Activated T-helper 2 cell treated with anti-CD3 and anti-CD28 coated beads, Interferon-gamma antibody, Interleukin-2, Interleukin-4, amounts not matched to agents 10 μg/mL and 5 μg/mL and 100 μg/mL, durations not matched to agents 14 hours and 24 hours and 36 hours (primary cell): ENCODE measurements at regions of chr11 and their contacts with region 1.

Region 1: DNA sequence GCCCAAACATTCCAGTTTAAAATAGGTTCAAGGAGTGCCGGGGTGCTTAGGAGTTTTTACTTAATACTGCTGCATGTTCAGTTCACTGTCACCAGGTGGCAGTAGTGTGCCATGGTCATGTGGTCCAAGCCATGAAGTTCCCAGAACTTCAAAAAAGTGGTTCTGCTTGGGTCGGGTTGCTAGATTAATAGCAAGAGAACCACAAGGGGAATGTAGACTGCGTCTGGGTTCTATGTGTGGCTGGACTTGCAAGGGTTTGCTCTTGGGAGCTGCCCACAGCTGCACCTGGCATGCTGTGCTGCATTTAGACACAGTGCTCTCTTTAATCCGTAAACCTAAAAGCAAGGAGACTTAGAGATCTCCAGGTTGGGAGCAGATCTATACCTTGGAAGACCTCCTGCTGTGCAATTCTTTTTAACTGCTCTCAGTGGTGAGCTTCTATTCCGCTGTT is 6.5 kb upstream of the SPON1 start:
- DNase-seq: peak; percentile 27
- H3K4me3 Mint-ChIP-seq: no peak overlapping the region
- H3K27ac Mint-ChIP-seq: no peak overlapping the region
- H3K4me1 Mint-ChIP-seq: no peaks in the 10 kb centered on the region
- H3K27me3 Mint-ChIP-seq: peaks cover 43% of the 10 kb centered on the region

Region 2: GRCh38 chr11:13772223-13773046 is 183.6 kb before region 1 on chr11:
- intact Hi-C with region 1: loop called (anchors 5 kb)
- DNase-seq: no peak
- H3K4me3 Mint-ChIP-seq: no peak overlapping the region
- H3K27ac Mint-ChIP-seq: no peak overlapping the region
- H3K4me1 Mint-ChIP-seq: no peaks in the 10 kb centered on the region
- H3K27me3 Mint-ChIP-seq: peaks cover 21% of the 10 kb centered on the region

Region 3: DNA sequence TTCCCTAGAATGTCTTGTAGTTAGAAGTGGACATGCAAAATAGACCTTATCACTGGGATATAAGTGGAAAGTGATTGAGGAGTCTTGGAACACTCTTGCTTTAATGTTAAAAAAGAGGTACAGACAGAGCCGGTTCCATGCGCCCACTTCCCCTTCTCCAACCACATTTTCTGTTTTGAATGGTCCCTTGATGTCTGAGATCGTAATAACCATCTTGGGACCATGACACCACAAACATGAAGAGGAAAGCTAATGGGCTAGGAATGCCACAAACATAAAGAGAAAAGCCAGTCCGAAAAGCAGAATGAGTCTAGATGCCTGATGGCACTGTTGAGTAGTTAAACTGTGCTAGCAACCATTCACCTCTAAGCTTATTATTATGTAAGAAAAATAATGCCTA is 48.3 kb before region 1 on chr11:
- intact Hi-C with region 1: no loop called
- DNase-seq: no peak
- H3K4me3 Mint-ChIP-seq: no peak overlapping the region
- H3K27ac Mint-ChIP-seq: no peak overlapping the region
- H3K4me1 Mint-ChIP-seq: no peaks in the 10 kb centered on the region
- H3K27me3 Mint-ChIP-seq: peaks cover 4% of the 10 kb centered on the region

Region 4: GRCh38 chr11:14249121-14249963 is 293.3 kb after region 1 on chr11:
- intact Hi-C with region 1: loop called (anchors 1 kb)
- DNase-seq: peak; percentile 46
- H3K4me3 Mint-ChIP-seq: no peak overlapping the region
- H3K27ac Mint-ChIP-seq: no peak overlapping the region
- H3K4me1 Mint-ChIP-seq: peaks cover 15% of the 10 kb centered on the region
- H3K27me3 Mint-ChIP-seq: peaks cover 21% of the 10 kb centered on the region

Region 5: DNA sequence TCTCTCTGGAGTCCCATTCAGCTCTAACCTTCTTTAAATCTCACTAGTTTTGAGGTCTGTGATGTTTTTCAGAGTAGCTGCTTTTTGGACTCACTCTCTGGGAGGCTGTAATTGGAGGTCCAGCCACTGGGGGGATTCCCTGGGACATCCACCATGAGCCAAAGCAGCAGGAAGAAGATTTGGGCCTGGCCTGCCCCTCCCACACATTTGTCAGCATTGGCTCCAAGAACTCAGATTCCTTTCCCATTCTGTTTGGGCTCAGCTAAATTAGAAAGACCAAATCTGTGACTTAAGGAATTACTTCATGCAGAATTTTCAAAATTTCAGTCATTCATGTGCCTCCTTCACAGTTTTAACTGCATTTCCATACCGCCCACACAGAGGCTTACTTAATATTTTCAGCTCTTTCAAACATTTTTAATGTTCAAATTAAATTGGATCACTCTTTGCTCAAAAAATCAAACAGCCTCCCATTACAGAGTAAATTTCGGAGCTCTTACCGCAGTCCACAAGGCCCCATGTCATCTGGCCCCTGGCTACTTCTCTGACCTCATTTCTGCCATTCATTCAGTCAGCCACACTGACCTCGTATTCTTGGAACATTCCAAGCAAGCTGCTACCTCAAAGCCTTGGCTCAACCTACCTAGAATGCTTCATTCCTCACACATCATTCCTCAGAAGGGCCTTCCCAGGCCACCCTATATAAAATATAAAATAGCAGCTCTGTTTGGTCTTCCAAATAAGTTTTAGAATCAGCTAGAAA is 457.5 kb after region 1 on chr11:
- intact Hi-C with region 1: no loop called
- DNase-seq: no peak
- H3K4me3 Mint-ChIP-seq: no peak overlapping the region
- H3K27ac Mint-ChIP-seq: peak overlapping the region; percentile 35
- H3K4me1 Mint-ChIP-seq: peaks cover 59% of the 10 kb centered on the region
- H3K27me3 Mint-ChIP-seq: no peaks in the 10 kb centered on the region

Region 6: GRCh38 chr11:14698771-14699170 is 742.8 kb after region 1 on chr11:
- intact Hi-C with region 1: no loop called
- DNase-seq: no peak
- H3K4me3 Mint-ChIP-seq: no peak overlapping the region
- H3K27ac Mint-ChIP-seq: peak overlapping the region; percentile 22
- H3K4me1 Mint-ChIP-seq: peaks cover 30% of the 10 kb centered on the region
- H3K27me3 Mint-ChIP-seq: no peaks in the 10 kb centered on the region